Motor neuron (in vitro differentiated cells): ENCODE measurements at regions of chr10 and their contacts with region 1.

Region 1: DNA sequence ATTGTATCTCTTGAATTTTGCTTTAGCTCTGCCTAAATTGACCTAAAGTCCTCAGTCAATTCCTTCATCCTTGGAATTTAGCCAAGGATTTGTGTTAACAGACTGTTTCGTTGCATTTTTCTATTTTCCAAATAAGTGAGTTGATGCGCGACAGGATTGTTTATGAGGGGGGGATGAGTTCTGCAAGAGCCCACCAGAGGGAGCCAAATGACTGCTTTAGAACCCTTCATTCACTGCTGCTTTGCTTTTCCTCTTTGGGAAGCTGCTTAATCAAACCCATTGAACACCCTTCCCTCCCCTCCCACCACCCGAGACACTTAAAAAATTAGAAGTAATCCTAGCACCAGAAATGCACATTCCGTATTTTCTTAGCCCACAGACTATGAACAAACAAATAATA is 33.7 kb upstream of the PTF1A start:
- ATAC-seq: peak; percentile 64 to 96 (median 83)
- H3K4me3 ChIP-seq: peak overlapping the region in 2 of 5 donors; percentile 5 to 8
- H3K27ac ChIP-seq: no peak overlapping the region
- H3K4me1 ChIP-seq: peaks cover 0 to 2% of the 10 kb centered on the region in 2 donors

Region 2: DNA sequence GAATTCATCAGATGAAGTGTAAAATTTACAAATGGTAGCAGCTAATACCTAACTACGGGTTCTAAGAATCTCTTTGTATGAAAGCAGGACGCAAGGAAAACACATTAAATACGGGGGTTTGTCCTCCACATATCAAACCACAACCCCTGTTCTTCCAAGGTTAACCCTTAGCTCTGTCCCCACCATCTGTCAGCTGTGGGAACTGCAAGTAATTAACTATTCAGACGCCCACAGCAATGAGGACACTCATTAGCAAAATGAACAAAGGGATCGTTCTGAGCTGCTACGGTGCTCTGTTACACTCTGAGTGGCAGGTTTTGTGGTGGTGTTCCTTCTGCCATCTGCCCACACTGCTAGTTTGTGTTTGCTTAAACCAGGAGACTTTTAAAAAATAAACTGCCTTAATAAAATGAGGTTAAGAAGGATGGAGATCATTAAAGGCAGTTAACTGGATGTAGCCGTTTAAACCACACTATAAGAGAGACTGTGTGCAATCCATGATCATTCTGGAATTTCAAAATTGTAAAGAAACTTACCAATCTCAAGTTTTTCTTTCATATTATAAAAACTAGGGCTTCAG is 134.9 kb after region 1 on chr10:
- in situ Hi-C with region 1: loop called in 2 of 9 experiments (anchors 10 to 25 kb)
- ATAC-seq: peak; percentile 22 to 69 (median 47)
- H3K4me3 ChIP-seq: no peak overlapping the region
- H3K27ac ChIP-seq: no peak overlapping the region
- H3K4me1 ChIP-seq: peaks cover 0 to 4% of the 10 kb centered on the region in 2 donors

Region 3: GRCh38 chr10:23525406-23525805 is 367.0 kb after region 1 on chr10:
- in situ Hi-C with region 1: loop called in 1 of 9 experiments (anchors 25 kb)
- ATAC-seq: peak in 2 of 8 experiments; percentile 36 to 37
- H3K4me3 ChIP-seq: no peak overlapping the region
- H3K27ac ChIP-seq: no peak overlapping the region
- H3K4me1 ChIP-seq: peaks cover 0 to 3% of the 10 kb centered on the region in 2 donors

Region 4: GRCh38 chr10:23694446-23694920 is 536.1 kb after region 1 on chr10:
- in situ Hi-C with region 1: loop called in 1 of 9 experiments (anchors 25 kb)
- ATAC-seq: peak; percentile 13 to 96 (median 94)
- H3K4me3 ChIP-seq: peak overlapping the region; percentile 44 to 75 (median 45)
- H3K27ac ChIP-seq: no peak overlapping the region
- H3K4me1 ChIP-seq: peaks cover 4 to 11% of the 10 kb centered on the region in 2 donors

Region 5: GRCh38 chr10:24556750-24557742 is 1398.7 kb after region 1 on chr10:
- in situ Hi-C with region 1: loop called in 1 of 9 experiments (anchors 25 kb)
- ATAC-seq: peak in 7 of 8 experiments; percentile 30 to 77 (median 64)
- H3K4me3 ChIP-seq: no peak overlapping the region
- H3K27ac ChIP-seq: no peak overlapping the region
- H3K4me1 ChIP-seq: peaks cover 0 to 4% of the 10 kb centered on the region in 2 donors